ENCODE measurements at regions of chr9 and their contacts with region 1.

Region 1: DNA sequence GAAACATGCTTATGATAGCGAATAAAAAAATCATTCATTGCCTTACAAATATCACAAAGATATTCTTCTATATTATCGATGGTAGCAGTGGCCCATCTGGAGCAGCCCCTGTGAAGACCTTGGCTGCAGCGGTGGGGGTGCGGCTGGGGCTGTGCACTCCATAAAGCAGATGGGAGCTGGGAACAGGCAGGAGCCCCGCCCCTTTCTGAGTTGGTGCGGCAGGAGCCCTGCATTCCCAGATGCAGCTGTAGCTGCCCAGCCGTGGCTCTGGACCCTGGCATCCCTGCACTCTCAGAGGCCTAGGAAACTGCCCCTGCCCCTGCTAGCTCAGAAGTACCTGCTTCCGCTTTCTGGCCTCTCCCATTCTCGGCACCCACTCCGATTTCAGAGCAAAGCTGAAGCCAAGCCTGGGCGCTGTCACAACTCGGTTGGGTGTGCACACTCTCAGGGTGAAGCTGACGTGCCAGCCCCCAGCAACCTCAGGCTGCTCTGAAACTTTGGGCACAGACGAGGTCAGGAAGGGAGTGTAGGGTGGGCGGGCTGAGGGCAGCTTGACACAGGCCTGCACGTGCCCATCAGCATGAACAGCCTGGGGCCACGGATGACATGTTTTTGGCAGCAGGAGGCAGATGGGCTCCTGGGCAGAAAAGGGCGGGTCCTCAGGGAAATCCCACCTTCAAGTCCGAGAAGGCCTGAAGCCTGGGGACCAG is 1440.8 kb upstream of the ACO1 start:
- DNase-seq: no peak
- ATAC-seq: no peak
- H3K4me3 ChIP-seq: no peak overlapping the region
- H3K27ac ChIP-seq: no peak overlapping the region
- H3K4me1 ChIP-seq: no peaks in the 10 kb centered on the region
- H3K27me3 ChIP-seq: no peaks in the 10 kb centered on the region
- CTCF ChIP-seq: no peak
- EP300 ChIP-seq: no peak
- POLR2A ChIP-seq: no peak
- RAD21 ChIP-seq: no peak

Region 2: DNA sequence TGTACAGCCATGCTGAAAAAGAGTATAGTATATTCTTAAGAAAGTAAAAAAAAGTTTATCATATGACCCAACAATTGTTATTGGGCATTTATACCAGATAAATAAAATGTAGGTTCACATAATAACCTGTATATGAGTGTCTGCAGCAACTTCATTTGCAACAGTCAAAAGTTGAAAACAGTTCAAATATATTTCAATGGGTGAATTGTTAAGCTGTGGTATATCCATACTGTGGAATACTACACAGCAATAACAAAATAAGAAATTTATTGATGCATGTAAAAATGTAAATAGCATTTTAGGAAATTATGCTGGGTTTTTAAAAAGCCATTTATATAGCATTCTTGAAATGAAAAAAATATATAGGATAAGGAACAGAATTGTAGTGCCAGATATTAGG is 20.7 kb after region 1 on chr9:
- CTCF ChIA-PET with region 1: no interaction called
- POLR2A ChIA-PET with region 1: no interaction called
- RAD21 ChIA-PET with region 1: no interaction called
- SMC1A ChIA-PET with region 1: no interaction called
- in situ Hi-C with region 1: no loop called
- intact Hi-C with region 1: loop called (anchors 2 kb)
- DNase-seq: no peak
- ATAC-seq: no peak
- H3K4me3 ChIP-seq: no peak overlapping the region
- H3K27ac ChIP-seq: no peak overlapping the region
- H3K4me1 ChIP-seq: no peaks in the 10 kb centered on the region
- H3K27me3 ChIP-seq: no peaks in the 10 kb centered on the region
- CTCF ChIP-seq: no peak
- EP300 ChIP-seq: no peak
- POLR2A ChIP-seq: no peak
- RAD21 ChIP-seq: no peak